ENCODE measurements at regions of chr5 and their contacts with region 1.

Region 1: GRCh38 chr5:149938791-149939358 is 5.7 kb downstream of the PDE6A start:
- DNase-seq: no peak
- ATAC-seq: no peak
- H3K4me3 ChIP-seq: no peak overlapping the region
- H3K27ac ChIP-seq: peak overlapping the region in 2 of 12 donors; percentile 16 to 28
- H3K4me1 ChIP-seq: peaks cover 0 to 29% (median 13%) of the 10 kb centered on the region in 12 donors
- H3K27me3 ChIP-seq: no peaks in the 10 kb centered on the region
- CTCF ChIP-seq: no peak
- POLR2A ChIP-seq: no peak

Region 2: GRCh38 chr5:149865746-149866145 is 73.1 kb before region 1 on chr5:
- intact Hi-C with region 1: loop called in 1 of 10 experiments (anchors 5 kb)
- DNase-seq: no peak
- ATAC-seq: no peak
- H3K4me3 ChIP-seq: no peak overlapping the region
- H3K27ac ChIP-seq: no peak overlapping the region
- H3K4me1 ChIP-seq: peaks cover 0 to 6% (median 0%) of the 10 kb centered on the region in 12 donors
- H3K27me3 ChIP-seq: no peaks in the 10 kb centered on the region
- CTCF ChIP-seq: no peak
- POLR2A ChIP-seq: no peak

Region 3: DNA sequence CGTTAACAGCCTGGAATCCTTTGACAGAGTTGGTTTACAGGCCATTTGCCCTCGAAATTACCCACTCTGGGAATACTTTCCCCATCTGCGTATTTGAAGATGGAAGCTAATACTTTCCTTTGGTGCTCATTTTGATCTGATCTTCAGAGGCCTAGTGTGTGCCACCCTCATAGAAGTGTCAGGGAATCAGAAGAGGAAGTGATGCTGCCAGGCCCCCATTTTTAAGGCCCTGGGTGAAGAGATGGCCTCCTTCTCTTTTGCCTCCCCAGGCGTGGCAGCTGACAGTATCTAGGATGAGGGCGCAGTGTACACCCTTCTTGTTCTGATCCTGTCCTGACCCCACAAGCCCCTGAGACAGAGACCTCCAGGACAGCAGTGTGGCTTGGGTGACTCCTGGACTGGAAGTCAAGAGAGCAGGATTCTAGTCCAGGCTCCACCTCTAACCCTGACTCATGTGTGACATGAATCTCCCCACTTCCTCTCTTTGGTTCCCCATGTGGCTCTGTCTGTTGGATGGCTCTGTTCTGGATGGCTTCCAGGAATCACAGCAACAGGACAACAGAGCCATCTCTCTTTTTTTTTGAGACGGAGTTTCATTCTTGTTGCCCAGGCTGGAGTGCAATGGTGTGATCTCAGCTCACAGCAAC is 119.7 kb after region 1 on chr5:
- intact Hi-C with region 1: no loop called
- DNase-seq: peak in 2 of 5 donors; percentile 33 to 38
- ATAC-seq: peak; percentile 26 to 65 (median 52)
- H3K4me3 ChIP-seq: no peak overlapping the region
- H3K27ac ChIP-seq: peak overlapping the region in 3 of 12 donors; percentile 9 to 54 (median 24)
- H3K4me1 ChIP-seq: peaks cover 0 to 54% (median 0%) of the 10 kb centered on the region in 12 donors
- H3K27me3 ChIP-seq: no peaks in the 10 kb centered on the region
- CTCF ChIP-seq: no peak
- POLR2A ChIP-seq: no peak

Measured in heart left ventricle (tissue), 16 donors.